Caco-2 (cell line): ENCODE measurements at regions of chr22 and their contacts with region 1.

Region 1: DNA sequence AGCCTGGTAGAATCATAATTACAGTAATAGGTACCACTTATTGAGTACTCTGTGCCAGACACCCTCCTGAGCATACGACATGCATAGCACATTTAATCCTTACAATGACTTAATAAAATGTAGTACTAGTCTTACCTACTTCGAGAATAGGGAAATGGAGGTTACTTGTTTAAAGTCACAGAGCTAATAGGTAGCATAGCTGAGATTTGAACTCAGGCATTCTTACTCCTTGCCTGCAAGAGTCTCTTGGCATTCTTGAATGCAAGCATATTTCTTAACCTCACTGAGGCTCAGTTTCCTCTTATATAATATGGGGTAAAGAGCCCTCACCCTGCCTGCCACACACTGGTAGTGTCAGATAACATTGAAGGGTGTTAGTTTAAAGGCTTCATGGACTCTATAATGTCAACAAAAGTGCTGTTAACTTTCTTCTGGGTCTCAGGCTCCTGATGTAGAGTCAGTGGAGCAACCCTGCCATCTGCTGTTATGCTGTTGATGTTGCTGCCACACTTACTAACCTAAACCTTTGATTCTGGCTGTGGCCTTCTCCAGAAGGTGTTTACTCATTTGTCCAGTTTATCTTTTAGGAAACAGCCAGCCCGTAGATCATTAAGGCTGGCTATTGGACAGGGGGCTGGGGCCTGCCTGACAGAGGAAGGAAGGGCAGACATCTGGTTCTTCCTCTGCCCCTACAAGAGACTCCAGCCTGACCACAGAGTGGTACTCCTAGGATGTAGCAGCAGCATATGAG is 18.9 kb downstream of the LIMK2 start:
- DNase-seq: peak; percentile 61 to 69
- H3K4me3 ChIP-seq: no peak overlapping the region
- H3K4me3 Mint-ChIP-seq: no peak overlapping the region
- H3K27ac Mint-ChIP-seq: no peak overlapping the region
- H3K4me1 ChIP-seq: peaks cover 32% of the 10 kb centered on the region
- H3K4me1 Mint-ChIP-seq: peaks cover 22% of the 10 kb centered on the region
- H3K27me3 ChIP-seq: no peaks in the 10 kb centered on the region
- H3K27me3 Mint-ChIP-seq: no peaks in the 10 kb centered on the region
- CTCF ChIP-seq: peak; percentile 75 to 85

Region 2: DNA sequence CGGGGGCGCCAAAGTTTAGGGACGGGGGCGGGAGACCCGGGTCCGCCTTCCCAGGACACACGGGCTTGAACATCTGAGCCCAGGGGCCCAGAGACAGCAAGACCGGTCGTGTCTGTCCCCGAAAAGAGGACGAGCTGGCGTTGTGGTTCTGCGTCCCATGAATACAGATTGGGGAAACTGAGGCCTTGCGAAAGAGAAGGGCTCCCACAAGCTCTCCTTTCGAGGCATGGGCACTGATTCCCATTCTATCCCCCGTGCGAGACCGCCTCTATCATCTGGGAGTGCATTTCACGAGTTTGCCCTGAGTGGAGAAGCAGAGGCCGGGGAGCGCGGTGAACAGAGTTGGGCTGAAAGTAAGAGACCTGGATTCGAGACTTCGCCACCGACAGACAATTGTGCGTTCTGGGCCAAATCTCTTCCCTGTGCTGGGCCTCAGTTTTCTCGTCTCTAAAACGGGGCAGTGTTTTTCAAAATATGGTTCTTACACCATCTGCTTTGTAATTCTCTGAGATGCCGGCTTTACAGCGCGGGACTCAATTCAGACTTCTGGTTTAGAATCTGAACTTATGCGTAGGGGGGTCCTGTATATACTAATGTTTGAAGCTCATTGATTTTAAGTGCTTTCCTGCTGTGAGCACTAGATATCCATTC is 70.6 kb before region 1 on chr22:
- CTCF ChIA-PET with region 1: interaction called, 4 read pairs
- POLR2A ChIA-PET with region 1: no interaction called
- intact Hi-C with region 1: loop called (anchors 5 kb)
- DNase-seq: peak in 1 of 2 experiments; percentile 30
- H3K4me3 ChIP-seq: peak overlapping the region; percentile 57
- H3K4me3 Mint-ChIP-seq: peak overlapping the region; percentile 94
- H3K27ac Mint-ChIP-seq: peak overlapping the region; percentile 94
- H3K4me1 ChIP-seq: 0 out of 2 replicates have a peak, but pooled peaks cover 4% of the 10 kb centered on the region
- H3K4me1 Mint-ChIP-seq: peaks cover 9% of the 10 kb centered on the region
- H3K27me3 ChIP-seq: no peaks in the 10 kb centered on the region
- H3K27me3 Mint-ChIP-seq: no peaks in the 10 kb centered on the region
- CTCF ChIP-seq: no peak

Region 3: DNA sequence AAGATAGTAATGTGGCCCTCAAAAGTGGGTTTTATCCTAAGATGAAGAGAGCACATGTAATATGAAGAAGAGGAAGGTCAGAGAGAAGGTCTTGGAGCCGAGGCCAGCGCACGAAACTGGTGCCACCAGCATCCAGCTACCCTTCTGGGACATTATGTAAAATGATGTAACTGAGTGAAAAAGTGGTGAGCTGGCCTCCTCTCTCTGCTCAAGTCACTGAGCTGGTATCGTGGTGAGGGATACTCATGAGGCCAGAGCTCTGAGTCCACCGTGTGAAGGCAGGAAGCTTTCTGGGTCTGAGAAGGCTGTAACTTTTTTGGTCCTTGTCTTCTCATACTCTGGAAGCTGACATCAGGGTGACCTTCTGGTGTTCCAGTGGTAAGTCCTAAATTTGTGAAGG is 46.0 kb before region 1 on chr22:
- CTCF ChIA-PET with region 1: no interaction called
- POLR2A ChIA-PET with region 1: no interaction called
- intact Hi-C with region 1: no loop called
- DNase-seq: no peak
- H3K4me3 ChIP-seq: no peak overlapping the region
- H3K4me3 Mint-ChIP-seq: no peak overlapping the region
- H3K27ac Mint-ChIP-seq: peak overlapping the region; percentile 56
- H3K4me1 ChIP-seq: no peaks in the 10 kb centered on the region
- H3K4me1 Mint-ChIP-seq: no peaks in the 10 kb centered on the region
- H3K27me3 ChIP-seq: no peaks in the 10 kb centered on the region
- H3K27me3 Mint-ChIP-seq: no peaks in the 10 kb centered on the region
- CTCF ChIP-seq: no peak

Region 4: GRCh38 chr22:31199183-31199582 is 31.9 kb before region 1 on chr22:
- CTCF ChIA-PET with region 1: no interaction called
- POLR2A ChIA-PET with region 1: no interaction called
- intact Hi-C with region 1: loop called (anchors 1 kb)
- DNase-seq: no peak
- H3K4me3 ChIP-seq: no peak overlapping the region
- H3K4me3 Mint-ChIP-seq: no peak overlapping the region
- H3K27ac Mint-ChIP-seq: no peak overlapping the region
- H3K4me1 ChIP-seq: no peaks in the 10 kb centered on the region
- H3K4me1 Mint-ChIP-seq: no peaks in the 10 kb centered on the region
- H3K27me3 ChIP-seq: no peaks in the 10 kb centered on the region
- H3K27me3 Mint-ChIP-seq: no peaks in the 10 kb centered on the region
- CTCF ChIP-seq: peak; percentile 23 to 49

Region 5: GRCh38 chr22:31211862-31212730 is 18.9 kb before region 1 on chr22 and contains the start of gene LIMK2:
- CTCF ChIA-PET with region 1: interaction called, 11 read pairs
- POLR2A ChIA-PET with region 1: no interaction called
- intact Hi-C with region 1: loop called (anchors 1 kb)
- DNase-seq: peak; percentile 93 to 97
- H3K4me3 ChIP-seq: peak within 1 kb of the TSS; percentile 81
- H3K4me3 Mint-ChIP-seq: peak within 1 kb of the TSS; percentile 83
- H3K27ac Mint-ChIP-seq: peak within 1 kb of the TSS; percentile 82
- H3K4me1 ChIP-seq: peaks cover 38% of the 10 kb centered on the region
- H3K4me1 Mint-ChIP-seq: peaks cover 26% of the 10 kb centered on the region
- H3K27me3 ChIP-seq: no peaks in the 10 kb centered on the region
- H3K27me3 Mint-ChIP-seq: no peaks in the 10 kb centered on the region
- CTCF ChIP-seq: peak; percentile 76 to 90
- total RNA-seq, gene LIMK2: 34.8 and 36.3 TPM in 2 replicates